ENCODE measurements at regions of chr1 and their contacts with region 1.

Region 1: GRCh38 chr1:145711213-145711651 is 4.1 kb upstream of the PDZK1 start:
- DNase-seq: peak; percentile 95
- ATAC-seq: peak; percentile 76
- H3K4me3 ChIP-seq: peak overlapping the region in 1 of 3 experiments; percentile 13; a peak in 1 of 6 replicates
- H3K27ac ChIP-seq: peak overlapping the region; percentile 75
- H3K4me1 ChIP-seq: peaks cover 98% of the 10 kb centered on the region
- H3K27me3 ChIP-seq: no peaks in the 10 kb centered on the region
- CTCF ChIP-seq: no peak
- EP300 ChIP-seq: peak; percentile 21 to 76; a peak in 2 of 4 replicates
- POLR2A ChIP-seq: peak in 1 of 2 experiments; percentile 41; a peak in 2 of 4 replicates
- RAD21 ChIP-seq: no peak

Region 2: GRCh38 chr1:145601593-145601992 is 109.6 kb before region 1 on chr1:
- CTCF ChIA-PET with region 1: no interaction called
- POLR2A ChIA-PET with region 1: no interaction called
- in situ Hi-C with region 1: no loop called
- intact Hi-C with region 1: no loop called
- DNase-seq: no peak
- ATAC-seq: no peak
- H3K4me3 ChIP-seq: no peak overlapping the region
- H3K27ac ChIP-seq: no peak overlapping the region
- H3K4me1 ChIP-seq: no peaks in the 10 kb centered on the region
- H3K27me3 ChIP-seq: no peaks in the 10 kb centered on the region
- CTCF ChIP-seq: no peak
- EP300 ChIP-seq: no peak
- POLR2A ChIP-seq: no peak
- RAD21 ChIP-seq: no peak

Region 3: GRCh38 chr1:145690624-145691035 is 20.6 kb before region 1 on chr1:
- CTCF ChIA-PET with region 1: no interaction called
- POLR2A ChIA-PET with region 1: interaction called, 45 read pairs
- in situ Hi-C with region 1: no loop called
- intact Hi-C with region 1: no loop called
- DNase-seq: peak; percentile 54
- ATAC-seq: peak; percentile 45
- H3K4me3 ChIP-seq: no peak overlapping the region; a peak in 1 of 6 replicates
- H3K27ac ChIP-seq: peak overlapping the region; percentile 51
- H3K4me1 ChIP-seq: peaks cover 33% of the 10 kb centered on the region
- H3K27me3 ChIP-seq: no peaks in the 10 kb centered on the region
- CTCF ChIP-seq: no peak
- EP300 ChIP-seq: 0 out of 4 replicates have a peak, but pooled peaks of 1 of the 2 experiments have one; percentile 31
- POLR2A ChIP-seq: no peak
- RAD21 ChIP-seq: no peak

Region 4: GRCh38 chr1:145695821-145696629 is 15.2 kb before region 1 on chr1:
- CTCF ChIA-PET with region 1: no interaction called
- POLR2A ChIA-PET with region 1: interaction called, 45 read pairs
- in situ Hi-C with region 1: no loop called
- intact Hi-C with region 1: loop called (anchors 2 kb)
- DNase-seq: no peak
- ATAC-seq: no peak
- H3K4me3 ChIP-seq: no peak overlapping the region
- H3K27ac ChIP-seq: no peak overlapping the region
- H3K4me1 ChIP-seq: peaks cover 19% of the 10 kb centered on the region
- H3K27me3 ChIP-seq: no peaks in the 10 kb centered on the region
- CTCF ChIP-seq: no peak
- EP300 ChIP-seq: no peak
- POLR2A ChIP-seq: no peak
- RAD21 ChIP-seq: no peak

Measured in HepG2 (cell line).